ENCODE measurements at regions of chr12 and their contacts with region 1.

Region 1: GRCh38 chr12:126915309-126915708 is 1351.7 kb upstream of the TMEM132C start:
- DNase-seq: no peak
- H3K4me3 ChIP-seq: no peak overlapping the region
- CTCF ChIP-seq: no peak
- POLR2A ChIP-seq: no peak

Region 2: GRCh38 chr12:128178966-128179365 is 1263.7 kb after region 1 on chr12:
- intact Hi-C with region 1: loop called (anchors 10 kb)
- DNase-seq: peak in 1 of 2 donors; percentile 42
- H3K4me3 ChIP-seq: no peak overlapping the region
- CTCF ChIP-seq: no peak
- POLR2A ChIP-seq: no peak